T-cell (primary cell): ENCODE measurements at regions of chr12 and their contacts with region 1.

Region 1: DNA sequence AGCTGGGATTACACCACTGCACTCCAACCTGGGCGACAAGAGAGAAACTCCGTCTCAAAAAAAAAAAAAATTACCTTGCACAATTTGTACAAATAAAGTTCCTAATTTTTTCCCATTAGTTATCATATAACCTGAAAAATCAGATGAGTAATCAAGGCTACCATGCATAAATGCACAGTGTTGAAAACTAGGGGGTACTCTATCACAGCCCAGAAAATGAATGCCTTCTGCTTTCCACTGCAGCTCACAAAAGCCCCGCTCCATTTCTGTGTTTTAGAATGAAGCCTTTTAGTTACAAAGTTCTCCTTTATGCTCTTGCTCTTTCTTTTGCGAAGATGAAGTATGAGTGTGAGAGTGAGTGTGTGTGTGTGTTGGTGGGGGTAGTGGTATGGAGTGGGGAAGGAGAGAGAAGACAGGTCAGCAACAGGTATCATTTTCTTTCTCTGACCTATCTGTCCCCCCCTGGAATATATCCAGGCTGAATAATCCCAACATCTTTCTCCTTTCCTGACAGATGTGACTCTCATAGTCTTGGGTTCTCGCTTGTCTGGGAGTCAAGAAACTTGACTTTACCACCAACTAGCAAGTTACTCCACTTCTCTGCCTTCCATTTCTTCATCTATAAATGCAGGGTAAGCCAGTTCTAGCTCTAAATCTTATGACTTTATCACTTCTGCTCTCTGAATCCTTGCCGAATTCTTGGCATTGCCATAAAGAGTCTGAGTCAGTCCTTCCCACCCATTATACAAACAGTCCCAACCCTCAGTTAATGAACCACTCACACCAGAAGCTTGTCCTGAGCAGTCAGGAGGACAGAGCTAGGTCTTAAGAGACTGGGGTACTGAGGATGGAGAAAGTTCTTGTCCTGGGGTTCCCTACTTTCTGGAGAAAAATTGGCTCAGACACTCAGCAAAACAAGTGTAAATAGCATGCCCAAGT is 16.1 kb downstream of the BIN2 start:
- DNase-seq: peak in 1 of 35 experiments; percentile 39
- ATAC-seq: peak in 3 of 4 experiments; percentile 53 to 73 (median 55)
- H3K4me3 ChIP-seq: no peak overlapping the region
- H3K4me3 Mint-ChIP-seq: peak overlapping the region in 1 of 3 donors; percentile 6
- H3K27ac ChIP-seq: peak overlapping the region; percentile 11
- H3K27ac Mint-ChIP-seq: peak overlapping the region; percentile 87 to 89
- H3K4me1 ChIP-seq: peaks cover 9 to 37% of the 10 kb centered on the region in 2 experiments
- H3K4me1 Mint-ChIP-seq: peaks cover 62 to 75% (median 69%) of the 10 kb centered on the region in 3 donors
- H3K27me3 ChIP-seq: no peaks in the 10 kb centered on the region
- H3K27me3 Mint-ChIP-seq: no peaks in the 10 kb centered on the region

Region 2: DNA sequence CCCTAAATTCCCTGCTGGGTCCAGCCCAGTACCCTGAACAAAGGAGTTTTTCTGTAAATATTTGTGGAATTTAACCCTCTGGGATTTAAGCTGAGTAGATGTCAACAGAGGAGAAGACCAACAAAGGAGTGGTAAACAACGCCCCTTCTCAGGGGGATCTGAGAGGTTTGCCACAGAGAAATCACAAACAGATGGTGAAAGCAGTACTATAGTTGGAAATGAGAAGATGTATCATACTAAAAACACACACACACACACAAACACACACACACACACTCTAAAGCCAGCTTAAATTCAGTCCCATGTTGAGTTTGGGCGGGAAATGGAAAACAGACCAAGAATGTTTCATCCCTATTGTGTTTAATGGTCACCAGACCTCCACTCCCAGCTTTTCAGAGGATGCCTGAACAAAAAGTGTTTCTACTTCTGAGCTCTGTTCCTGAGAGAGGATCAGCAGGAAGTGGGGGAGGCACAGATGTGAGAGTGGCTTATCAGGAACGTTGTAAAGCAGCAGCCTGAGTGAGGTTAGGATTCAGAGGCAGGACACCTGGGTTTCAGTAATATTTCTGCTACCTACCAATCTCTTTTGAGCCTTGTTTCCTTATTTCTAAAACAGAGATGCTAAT is 12.9 kb after region 1 on chr12:
- CTCF ChIA-PET with region 1: interaction called in 1 of 2 experiments, 3 read pairs
- POLR2A ChIA-PET with region 1: interaction called in 1 of 2 experiments, 12 read pairs
- DNase-seq: peak in 1 of 35 experiments; percentile 41
- ATAC-seq: no peak
- H3K4me3 ChIP-seq: peak overlapping the region; percentile 51 to 78
- H3K4me3 Mint-ChIP-seq: peak overlapping the region; percentile 96 to 98 (median 96)
- H3K27ac ChIP-seq: peak overlapping the region; percentile 93
- H3K27ac Mint-ChIP-seq: peak overlapping the region; percentile 98
- H3K4me1 ChIP-seq: peaks cover 47 to 86% of the 10 kb centered on the region in 2 experiments
- H3K4me1 Mint-ChIP-seq: peaks cover 85 to 96% (median 86%) of the 10 kb centered on the region in 3 donors
- H3K27me3 ChIP-seq: no peaks in the 10 kb centered on the region
- H3K27me3 Mint-ChIP-seq: no peaks in the 10 kb centered on the region

Region 3: DNA sequence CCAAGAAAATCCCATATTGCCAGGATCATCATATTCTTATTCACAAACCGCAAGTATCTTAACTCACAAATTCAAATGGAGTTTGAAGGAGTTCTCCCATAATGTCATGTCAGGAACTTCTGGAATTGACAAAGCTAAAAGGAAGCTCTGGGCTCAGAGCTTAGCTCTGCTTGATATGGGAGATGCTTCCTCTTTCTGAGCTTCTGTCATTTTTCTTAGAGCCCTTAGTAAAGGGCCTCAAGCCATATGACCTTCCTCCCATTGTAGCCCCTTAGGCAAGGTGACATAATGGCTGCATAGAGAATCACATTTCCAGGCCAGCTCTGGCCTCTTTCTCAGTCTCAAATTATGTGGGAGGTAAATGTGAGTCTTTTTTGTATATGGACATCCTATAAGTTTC is 157.6 kb after region 1 on chr12:
- CTCF ChIA-PET with region 1: interaction called in 1 of 2 experiments, 10 read pairs
- POLR2A ChIA-PET with region 1: no interaction called
- DNase-seq: no peak
- ATAC-seq: no peak
- H3K4me3 ChIP-seq: no peak overlapping the region
- H3K4me3 Mint-ChIP-seq: no peak overlapping the region
- H3K27ac ChIP-seq: no peak overlapping the region
- H3K27ac Mint-ChIP-seq: no peak overlapping the region
- H3K4me1 ChIP-seq: no peaks in the 10 kb centered on the region
- H3K4me1 Mint-ChIP-seq: no peaks in the 10 kb centered on the region
- H3K27me3 ChIP-seq: no peaks in the 10 kb centered on the region
- H3K27me3 Mint-ChIP-seq: no peaks in the 10 kb centered on the region